ENCODE measurements at regions of chr12 and their contacts with region 1.

Region 1: GRCh38 chr12:11621797-11622423 is 27.6 kb upstream of the ETV6 start:
- DNase-seq: no peak
- ATAC-seq: peak; percentile 64
- H3K4me3 ChIP-seq: no peak overlapping the region
- H3K27ac ChIP-seq: no peak overlapping the region
- H3K4me1 ChIP-seq: no peaks in the 10 kb centered on the region
- H3K27me3 ChIP-seq: no peaks in the 10 kb centered on the region
- CTCF ChIP-seq: peak in 1 of 3 experiments; percentile 8; a peak in 2 of 6 replicates
- EP300 ChIP-seq: no peak
- POLR2A ChIP-seq: no peak
- RAD21 ChIP-seq: peak; percentile 41; the same call in 1 of the 2 replicates

Region 2: DNA sequence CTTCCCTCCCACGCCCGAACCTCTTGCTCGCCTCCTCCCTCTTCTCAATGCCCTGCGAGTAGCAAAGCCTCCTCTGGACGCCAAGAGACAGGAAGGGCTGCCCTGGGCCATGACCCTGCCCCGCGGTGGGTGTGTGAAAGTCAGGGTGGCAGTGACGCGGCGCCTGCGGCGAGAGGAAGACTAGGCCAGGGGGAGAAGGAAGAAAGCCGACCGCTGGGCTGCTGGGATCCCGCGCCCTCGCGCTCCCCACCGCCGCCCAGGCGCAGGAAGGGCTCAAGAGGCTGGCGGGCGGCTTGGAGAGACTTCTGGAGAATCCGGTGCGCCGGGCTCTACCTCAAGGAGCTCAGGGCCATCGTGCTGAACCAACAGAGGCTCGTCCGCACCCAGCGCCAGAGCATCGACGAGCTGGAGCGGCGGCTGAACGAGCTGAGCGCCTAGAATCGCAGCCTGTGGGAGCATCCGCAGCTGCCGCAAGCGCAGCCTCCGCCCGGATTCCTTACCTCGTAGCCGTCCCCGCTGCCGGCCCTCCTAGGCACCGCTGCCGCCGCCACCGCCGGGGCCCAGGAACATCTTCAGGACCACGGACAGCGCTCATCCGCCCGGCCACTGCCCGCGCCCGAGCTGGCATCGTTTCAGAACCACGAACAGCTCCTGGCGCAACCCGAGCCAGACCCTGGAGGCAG is 121.6 kb before region 1 on chr12:
- CTCF ChIA-PET with region 1: no interaction called
- POLR2A ChIA-PET with region 1: no interaction called
- RAD21 ChIA-PET with region 1: no interaction called
- SMC1A ChIA-PET with region 1: no interaction called
- in situ Hi-C with region 1: no loop called
- intact Hi-C with region 1: loop called (anchors 10 kb)
- DNase-seq: no peak
- ATAC-seq: peak; percentile 83
- H3K4me3 ChIP-seq: no peak overlapping the region
- H3K27ac ChIP-seq: no peak overlapping the region
- H3K4me1 ChIP-seq: peaks cover 5% of the 10 kb centered on the region
- H3K27me3 ChIP-seq: peaks cover 0 to 7% of the 10 kb centered on the region in 2 experiments; a peak in 3 of 4 replicates
- CTCF ChIP-seq: no peak
- EP300 ChIP-seq: no peak; a peak in 1 of 4 replicates
- POLR2A ChIP-seq: no peak
- RAD21 ChIP-seq: no peak

Measured in GM12878 (cell line).